Dendritic cell treated with granulocyte-macrophage colony-stimulating factor and Interleukin-4, amounts not matched to agents 40 ng/mL and 50 ng/mL, for 4 days (primary cell): ENCODE measurements at regions of chr12 and their contacts with region 1.

Region 1: DNA sequence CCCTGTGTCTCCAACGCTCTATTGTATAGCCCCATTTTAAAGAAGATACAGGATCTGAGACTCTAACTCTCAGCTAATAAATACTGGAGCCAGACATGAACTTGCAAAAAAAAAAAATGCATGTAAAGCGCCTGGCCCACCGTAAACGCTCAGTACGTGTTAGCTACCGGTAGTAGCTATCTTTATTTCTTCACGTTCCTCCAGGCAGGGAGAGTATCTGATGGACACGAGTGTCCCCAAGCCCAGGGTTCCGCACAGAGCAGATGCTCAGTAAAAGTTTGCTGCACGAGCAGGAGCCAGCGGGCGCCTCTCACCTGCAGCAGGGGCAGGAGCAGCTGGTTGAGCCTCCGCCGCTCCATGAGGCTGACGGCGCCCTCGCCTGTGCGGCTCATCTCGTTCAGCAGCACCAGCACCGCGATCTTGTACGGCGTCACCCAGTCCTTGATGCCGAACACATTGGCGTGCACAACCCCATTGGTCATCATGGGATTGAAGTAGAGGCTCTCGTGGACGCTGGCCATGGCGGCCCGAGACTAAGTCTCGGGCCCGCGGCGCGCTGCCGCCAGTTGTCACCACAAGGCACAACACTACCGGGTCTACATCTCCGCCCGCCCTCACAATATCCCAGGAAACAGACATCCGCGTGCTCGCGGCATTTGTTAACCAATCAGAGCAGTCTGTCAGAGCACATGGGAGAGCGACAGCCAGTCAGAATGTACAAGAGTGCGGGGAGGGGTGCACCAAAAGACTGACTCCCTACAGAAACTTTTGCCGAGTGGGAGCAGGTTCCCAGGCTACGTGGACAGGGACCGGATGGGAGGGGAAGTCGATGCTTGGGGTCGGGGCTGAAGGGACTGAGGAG is at the start of gene ANAPC5:
- H3K4me3 Mint-ChIP-seq: peak within 1 kb of the TSS; percentile 91
- H3K27ac Mint-ChIP-seq: peak within 1 kb of the TSS; percentile 98
- H3K4me1 Mint-ChIP-seq: peaks cover 19% of the 10 kb centered on the region
- H3K27me3 Mint-ChIP-seq: peaks cover under 1% of the 10 kb centered on the region

Region 2: DNA sequence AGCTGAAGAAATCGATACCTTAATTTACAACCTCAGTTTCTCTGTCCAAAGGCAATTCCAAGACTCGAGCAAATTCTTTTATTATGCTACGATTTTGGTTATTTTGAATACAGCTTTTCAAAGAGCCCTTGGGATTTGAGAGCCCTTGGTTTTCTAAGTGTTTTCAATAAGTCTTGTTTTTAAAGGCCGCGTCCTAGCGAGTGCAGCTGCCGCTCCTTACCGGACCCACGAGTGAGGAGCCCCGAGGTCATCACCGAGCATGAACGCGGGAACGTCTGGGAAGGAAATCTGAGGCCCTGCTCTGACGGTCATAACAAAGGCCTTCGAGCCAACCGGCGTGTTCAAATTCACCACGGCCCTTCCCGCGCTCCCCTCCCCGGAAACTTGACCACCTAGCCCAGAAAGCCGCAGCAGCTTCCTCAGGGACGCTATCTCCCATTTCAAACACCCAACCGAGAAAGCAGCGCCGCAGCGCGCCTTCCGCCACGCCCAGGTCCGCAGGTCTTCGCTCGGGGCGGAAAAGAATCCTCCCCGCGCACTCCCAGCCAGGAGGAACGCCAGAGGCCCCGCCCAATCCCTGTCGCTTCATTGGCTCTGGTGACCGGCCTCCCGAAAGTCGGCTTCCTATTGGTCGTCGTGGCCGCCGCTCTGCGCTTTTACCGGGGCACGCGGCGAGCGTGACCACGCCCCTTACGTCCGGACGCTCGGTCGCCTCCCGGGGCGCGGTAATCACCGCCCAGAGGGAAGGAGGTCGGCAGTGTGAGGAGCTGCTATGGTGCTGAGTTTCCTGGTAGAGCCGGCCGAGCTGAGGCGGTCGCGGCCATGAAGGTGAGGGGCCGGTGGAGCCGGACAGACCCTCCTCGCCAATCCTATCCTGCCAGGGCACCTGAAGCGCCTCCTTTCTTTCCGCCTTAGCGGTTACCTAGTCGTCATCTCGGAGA is 47.6 kb after region 1 on chr12 and contains the start of gene RNF34:
- intact Hi-C with region 1: loop called (anchors 1 kb)
- H3K4me3 Mint-ChIP-seq: peak within 1 kb of the TSS; percentile 96
- H3K27ac Mint-ChIP-seq: peak within 1 kb of the TSS; percentile 89
- H3K4me1 Mint-ChIP-seq: peaks cover 23% of the 10 kb centered on the region
- H3K27me3 Mint-ChIP-seq: no peaks in the 10 kb centered on the region

Region 3: DNA sequence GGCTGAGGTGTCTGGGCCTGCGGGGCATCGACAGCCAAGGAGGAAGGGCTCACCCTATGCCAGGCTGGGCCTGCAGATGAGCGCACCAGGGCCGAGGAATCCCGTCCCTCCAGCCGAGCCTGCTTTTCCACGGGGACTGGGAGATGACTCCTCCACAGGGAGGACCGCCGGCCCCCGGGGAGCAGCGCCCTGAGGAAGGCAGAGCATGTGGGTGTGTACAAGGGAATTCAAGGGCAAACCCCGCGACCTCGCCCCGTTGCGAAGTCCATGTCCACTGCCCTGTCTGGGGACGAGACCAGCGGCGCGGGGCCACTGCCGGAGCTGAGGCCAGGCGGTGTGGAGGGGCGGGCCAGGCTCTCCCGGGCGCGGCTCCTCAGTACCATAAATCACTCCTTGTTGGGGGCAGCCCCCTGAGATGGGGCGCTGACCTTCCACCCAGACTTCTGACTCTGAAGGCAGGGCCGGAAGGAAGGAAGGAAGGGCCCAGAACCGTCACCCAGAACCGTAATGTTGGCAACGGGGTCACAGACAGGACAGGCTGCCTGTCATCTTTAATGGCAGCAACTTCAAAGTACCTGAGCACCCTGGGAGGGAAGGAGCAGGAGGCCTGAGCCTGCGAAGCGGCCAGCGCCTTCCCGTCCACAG is 100.4 kb after region 1 on chr12:
- intact Hi-C with region 1: loop called (anchors 1 kb)
- H3K4me3 Mint-ChIP-seq: peak overlapping the region; percentile 59
- H3K27ac Mint-ChIP-seq: peak overlapping the region; percentile 97
- H3K4me1 Mint-ChIP-seq: peaks cover 92% of the 10 kb centered on the region
- H3K27me3 Mint-ChIP-seq: no peaks in the 10 kb centered on the region